Dorsolateral prefrontal cortex (tissue), 120 donors: ENCODE measurements at regions of chr6 and their contacts with region 1.

Region 1: GRCh38 chr6:167493976-167494697 is 169.3 kb downstream of the TTLL2 start:
- DNase-seq: peak in 1 of 10 donors; percentile 45
- H3K4me3 ChIP-seq: peak overlapping the region in 1 of 59 donors; percentile 8
- H3K27ac ChIP-seq: peak overlapping the region in 8 of 59 donors; percentile 4 to 64 (median 32)
- H3K27me3 ChIP-seq: peaks cover 0 to 7% (median 0%) of the 10 kb centered on the region in 45 donors
- CTCF ChIP-seq: no peak

Region 2: DNA sequence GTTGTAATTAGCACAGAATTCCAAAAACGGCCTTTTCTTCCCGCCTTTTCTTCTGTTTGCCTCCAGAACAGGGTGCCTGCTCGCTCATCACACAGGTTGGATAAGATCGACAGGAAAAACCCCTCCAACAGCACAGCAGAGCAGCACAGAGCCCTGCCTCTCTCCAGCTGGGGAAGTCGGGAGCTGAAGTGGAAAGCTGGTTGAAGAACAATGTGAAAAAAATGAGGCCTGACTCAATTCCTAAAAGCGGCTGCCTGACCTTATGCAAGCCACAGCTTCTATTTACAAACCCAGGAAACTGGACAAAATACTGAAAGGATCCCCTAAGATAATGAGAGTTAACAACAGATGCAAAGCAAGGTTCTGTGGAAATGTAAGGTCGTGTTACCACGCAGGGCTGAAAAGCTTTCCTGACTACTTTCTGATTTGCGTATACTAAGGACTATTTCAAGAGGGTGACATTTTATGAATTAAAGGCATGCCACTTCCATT is 52.4 kb before region 1 on chr6:
- intact Hi-C with region 1: no loop called
- DNase-seq: no peak
- H3K4me3 ChIP-seq: peak overlapping the region in 5 of 59 donors; percentile 6 to 23 (median 14)
- H3K27ac ChIP-seq: no peak overlapping the region
- H3K27me3 ChIP-seq: no peaks in the 10 kb centered on the region
- CTCF ChIP-seq: no peak

Region 3: GRCh38 chr6:167543602-167544497 is 49.7 kb after region 1 on chr6:
- intact Hi-C with region 1: loop called (anchors 5 to 10 kb)
- DNase-seq: no peak
- H3K4me3 ChIP-seq: no peak overlapping the region
- H3K27ac ChIP-seq: peak overlapping the region in 7 of 59 donors; percentile 17 to 58 (median 40)
- H3K27me3 ChIP-seq: no peaks in the 10 kb centered on the region
- CTCF ChIP-seq: no peak

Region 4: GRCh38 chr6:167550941-167551627 is 56.9 kb after region 1 on chr6:
- intact Hi-C with region 1: loop called (anchors 5 to 10 kb)
- DNase-seq: peak in 9 of 10 donors; percentile 40 to 85 (median 74)
- H3K4me3 ChIP-seq: peak overlapping the region in 17 of 59 donors; percentile 1 to 45 (median 9)
- H3K27ac ChIP-seq: peak overlapping the region in 29 of 59 donors; percentile 2 to 80 (median 49)
- H3K27me3 ChIP-seq: no peaks in the 10 kb centered on the region
- CTCF ChIP-seq: peak in 2 of 56 donors; percentile 8 to 11

Region 5: DNA sequence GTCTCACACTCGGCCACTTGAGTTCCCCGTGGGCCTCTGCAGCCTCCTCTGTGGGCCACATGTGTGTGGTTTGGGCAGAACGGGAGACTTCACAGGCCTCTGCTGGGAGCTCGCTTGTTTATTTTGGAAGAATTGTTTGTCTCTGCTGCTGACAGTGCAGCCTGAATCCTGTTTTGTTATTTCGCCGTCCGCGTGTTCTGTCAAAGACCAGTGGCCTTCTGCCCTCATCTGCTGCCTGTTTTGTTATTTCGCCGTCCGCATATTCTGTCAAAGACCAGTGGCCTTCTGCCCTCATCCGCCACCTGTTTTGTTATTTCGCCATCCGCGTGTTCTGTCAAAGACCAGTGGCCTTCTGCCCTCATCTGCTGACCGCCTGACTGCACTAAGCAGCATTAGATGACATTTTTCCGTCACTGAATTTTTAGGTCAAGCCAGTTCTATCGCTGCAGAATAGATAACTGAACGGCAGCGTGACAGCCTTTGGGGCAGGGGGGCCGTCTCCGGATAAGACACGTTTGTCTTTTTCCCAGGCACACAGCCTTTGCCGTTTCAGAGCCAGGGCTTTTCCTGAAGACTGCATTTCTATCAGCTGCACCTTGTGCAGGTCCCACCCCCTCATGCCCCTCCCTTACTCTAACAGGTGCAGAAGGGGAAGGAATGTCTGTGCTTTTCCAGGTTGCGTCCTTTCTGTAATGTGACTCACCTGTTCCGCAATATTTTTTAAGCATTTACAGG is 174.0 kb after region 1 on chr6:
- intact Hi-C with region 1: loop called in 1 of 2 experiments (anchors 5 kb)
- DNase-seq: no peak
- H3K4me3 ChIP-seq: no peak overlapping the region
- H3K27ac ChIP-seq: peak overlapping the region in 55 of 59 donors; percentile 4 to 94 (median 70)
- H3K27me3 ChIP-seq: no peaks in the 10 kb centered on the region
- CTCF ChIP-seq: no peak

Region 6: DNA sequence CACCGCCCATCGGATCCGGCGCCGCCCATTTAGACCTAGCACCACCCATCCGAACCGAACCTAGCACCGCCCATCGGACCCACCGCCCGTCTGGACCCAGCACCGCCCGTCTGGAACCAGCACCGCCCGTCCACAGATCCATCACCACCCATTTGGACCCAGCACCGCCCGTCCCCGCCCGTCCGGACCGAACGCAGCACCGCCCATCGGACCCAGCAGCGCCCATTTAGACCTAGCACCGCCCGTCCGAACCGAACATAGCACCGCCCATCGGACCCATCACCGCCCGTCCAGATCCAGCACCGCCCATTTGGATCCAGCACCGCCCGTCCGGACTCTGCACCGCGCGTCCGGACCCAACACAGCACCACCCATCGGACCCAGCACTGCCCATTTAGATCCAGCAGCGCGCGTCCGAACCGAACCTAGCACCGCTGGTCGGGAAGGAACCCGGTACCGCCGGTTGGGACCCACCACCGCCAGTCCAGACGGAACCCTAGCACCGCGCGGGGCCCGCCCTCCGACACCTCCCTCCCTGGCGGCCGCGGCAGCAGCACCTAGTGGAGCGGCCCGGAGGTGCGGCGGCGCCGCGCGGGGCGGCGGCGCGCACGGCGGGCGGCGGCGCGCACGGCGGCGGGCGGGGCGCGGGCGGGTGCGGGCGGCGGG is 332.2 kb after region 1 on chr6:
- intact Hi-C with region 1: loop called in 1 of 2 experiments (anchors 10 kb)
- DNase-seq: peak; percentile 52 to 84 (median 74)
- H3K4me3 ChIP-seq: peak overlapping the region; percentile 37 to 89 (median 74)
- H3K27ac ChIP-seq: peak overlapping the region in 43 of 59 donors; percentile 42 to 87 (median 74)
- H3K27me3 ChIP-seq: no peaks in the 10 kb centered on the region
- CTCF ChIP-seq: peak in 46 of 56 donors; percentile 9 to 53 (median 28)